Heart left ventricle (tissue), 16 donors: ENCODE measurements at regions of chr1 and their contacts with region 1.

Region 1: GRCh38 chr1:35192853-35193664 is at the start of gene SFPQ:
- DNase-seq: peak; percentile 96 to 98 (median 97)
- ATAC-seq: peak; percentile 94 to 99 (median 98)
- H3K4me3 ChIP-seq: peak within 1 kb of the TSS; percentile 85 to 100 (median 99)
- H3K27ac ChIP-seq: peak within 1 kb of the TSS; percentile 97 to 100 (median 98)
- H3K4me1 ChIP-seq: peaks cover 9 to 41% (median 33%) of the 10 kb centered on the region in 12 donors
- H3K27me3 ChIP-seq: no peaks in the 10 kb centered on the region
- CTCF ChIP-seq: no peak
- POLR2A ChIP-seq: peak; percentile 40 to 92
- total RNA-seq, gene SFPQ: 58.6 to 114 (median 76.4) TPM

Region 2: GRCh38 chr1:35173909-35174540 is 19.0 kb before region 1 on chr1:
- intact Hi-C with region 1: loop called in 1 of 10 experiments (anchors 2 kb)
- DNase-seq: no peak
- ATAC-seq: no peak
- H3K4me3 ChIP-seq: no peak overlapping the region
- H3K27ac ChIP-seq: no peak overlapping the region
- H3K4me1 ChIP-seq: peaks cover 0 to 12% (median 5%) of the 10 kb centered on the region in 12 donors
- H3K27me3 ChIP-seq: no peaks in the 10 kb centered on the region
- CTCF ChIP-seq: no peak
- POLR2A ChIP-seq: no peak

Region 3: DNA sequence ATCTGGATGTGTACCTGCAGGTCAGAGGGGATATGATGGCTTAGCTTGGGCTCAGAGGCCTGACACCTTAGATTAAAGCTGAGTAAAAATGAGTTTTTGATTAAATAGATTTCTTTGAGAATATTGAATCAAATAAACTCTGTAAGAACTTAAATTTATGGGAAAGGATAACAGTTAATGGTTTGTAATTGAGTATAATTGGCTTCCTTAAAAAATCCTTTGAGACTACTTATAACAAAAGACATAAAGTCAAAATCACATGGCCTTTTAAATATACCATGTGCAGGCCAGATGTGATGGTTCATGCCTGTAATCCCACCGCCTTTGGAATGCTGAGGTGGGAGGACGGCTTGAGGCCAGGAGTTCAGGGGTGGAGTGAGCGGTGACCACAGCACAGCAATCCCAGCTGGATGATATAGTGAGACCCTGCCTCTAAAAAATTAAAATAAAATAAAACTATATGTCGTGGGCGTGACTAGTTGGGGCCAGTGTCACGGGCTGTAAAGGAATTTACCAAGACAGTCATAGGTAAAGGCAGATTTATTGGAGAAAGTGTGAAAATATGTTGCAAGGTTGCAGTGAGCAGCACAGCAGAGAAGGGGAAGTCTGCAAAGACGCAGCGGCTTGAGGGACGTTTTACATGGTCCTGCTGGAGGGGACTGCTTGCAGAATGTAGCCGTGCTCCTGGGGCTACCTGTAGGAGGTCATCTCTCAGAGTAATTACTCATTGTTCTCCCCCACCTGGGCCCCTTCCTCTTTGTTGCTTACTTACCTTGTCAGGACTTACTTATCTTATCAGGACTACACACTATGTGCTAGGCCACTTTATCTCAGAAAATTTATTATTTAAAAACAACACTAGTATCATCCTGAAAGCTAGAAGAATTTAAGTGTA is 197.8 kb after region 1 on chr1:
- intact Hi-C with region 1: loop called in 1 of 10 experiments (anchors 10 kb)
- DNase-seq: no peak
- ATAC-seq: no peak
- H3K4me3 ChIP-seq: no peak overlapping the region
- H3K27ac ChIP-seq: no peak overlapping the region
- H3K4me1 ChIP-seq: no peaks in the 10 kb centered on the region
- H3K27me3 ChIP-seq: no peaks in the 10 kb centered on the region
- CTCF ChIP-seq: no peak
- POLR2A ChIP-seq: no peak

Region 4: GRCh38 chr1:35557292-35558063 is 364.4 kb after region 1 on chr1 and contains the starts of genes KIAA0319L and NCDN:
- intact Hi-C with region 1: loop called in 3 of 10 experiments (anchors 10 kb)
- DNase-seq: peak; percentile 97 to 98 (median 98)
- ATAC-seq: peak; percentile 94 to 97 (median 96)
- H3K4me3 ChIP-seq: peak within 1 kb of the TSS; percentile 69 to 98 (median 92)
- H3K27ac ChIP-seq: peak within 1 kb of the TSS; percentile 90 to 99 (median 98)
- H3K4me1 ChIP-seq: peaks cover 0 to 75% (median 49%) of the 10 kb centered on the region in 12 donors
- H3K27me3 ChIP-seq: no peaks in the 10 kb centered on the region
- CTCF ChIP-seq: no peak
- POLR2A ChIP-seq: peak in 1 of 2 donors; percentile 65
- total RNA-seq, gene KIAA0319L: 58.3 to 108 (median 78.3) TPM
- total RNA-seq, gene NCDN: 20.7 to 44.4 (median 35.3) TPM